CD4-positive, alpha-beta memory T cell (primary cell): ENCODE measurements at regions of chr12 and their contacts with region 1.

Region 1: GRCh38 chr12:9647825-9648700 is 21.4 kb upstream of the CLEC2D start:
- DNase-seq: peak; percentile 94 to 96 (median 94)
- H3K4me3 ChIP-seq: peak overlapping the region; percentile 91 to 99
- H3K4me3 Mint-ChIP-seq: peak overlapping the region; percentile 94 to 100 (median 99)
- H3K27ac ChIP-seq: peak overlapping the region; percentile 83
- H3K27ac Mint-ChIP-seq: peak overlapping the region; percentile 85 to 99 (median 97)
- H3K4me1 ChIP-seq: peaks cover 62% of the 10 kb centered on the region
- H3K4me1 Mint-ChIP-seq: peaks cover 39 to 66% (median 50%) of the 10 kb centered on the region in 4 donors
- H3K27me3 ChIP-seq: no peaks in the 10 kb centered on the region
- H3K27me3 Mint-ChIP-seq: no peaks in the 10 kb centered on the region

Region 2: DNA sequence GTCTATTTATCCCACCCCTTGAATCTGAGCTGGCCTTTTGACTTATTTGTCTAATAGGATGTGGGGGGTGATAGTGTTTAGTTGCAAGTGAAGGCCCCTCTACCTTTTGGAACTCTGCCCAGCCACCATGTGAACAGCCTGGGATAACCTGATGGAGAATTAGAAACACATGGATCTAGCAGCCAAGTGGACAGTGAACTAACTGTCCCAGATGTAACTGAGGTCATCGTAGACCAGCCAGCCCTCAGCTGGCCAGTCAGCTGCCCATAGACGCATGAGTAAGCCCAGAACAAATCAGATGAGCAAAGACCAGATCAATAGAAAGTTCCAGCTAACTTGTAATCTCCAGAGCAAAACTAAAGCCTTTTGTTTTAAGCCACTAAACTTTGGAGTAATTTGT is 59.3 kb before region 1 on chr12:
- CTCF ChIA-PET with region 1: no interaction called
- POLR2A ChIA-PET with region 1: no interaction called
- intact Hi-C with region 1: no loop called
- DNase-seq: no peak
- H3K4me3 ChIP-seq: no peak overlapping the region
- H3K4me3 Mint-ChIP-seq: peak overlapping the region in 1 of 8 donors; percentile 12
- H3K27ac ChIP-seq: no peak overlapping the region
- H3K27ac Mint-ChIP-seq: peak overlapping the region in 1 of 7 donors; percentile 55
- H3K4me1 ChIP-seq: no peaks in the 10 kb centered on the region
- H3K4me1 Mint-ChIP-seq: peaks cover 0 to 1% (median 0%) of the 10 kb centered on the region in 4 donors
- H3K27me3 ChIP-seq: no peaks in the 10 kb centered on the region
- H3K27me3 Mint-ChIP-seq: no peaks in the 10 kb centered on the region

Region 3: GRCh38 chr12:9634177-9634803 is 13.8 kb before region 1 on chr12:
- CTCF ChIA-PET with region 1: interaction called, 16 read pairs
- POLR2A ChIA-PET with region 1: interaction called, 120 read pairs
- intact Hi-C with region 1: loop called (anchors 1 kb)
- DNase-seq: peak; percentile 76 to 77 (median 77)
- H3K4me3 ChIP-seq: no peak overlapping the region
- H3K4me3 Mint-ChIP-seq: peak overlapping the region in 6 of 8 donors; percentile 51 to 80 (median 61)
- H3K27ac ChIP-seq: no peak overlapping the region
- H3K27ac Mint-ChIP-seq: peak overlapping the region; percentile 22 to 97 (median 91)
- H3K4me1 ChIP-seq: peaks cover 70% of the 10 kb centered on the region
- H3K4me1 Mint-ChIP-seq: peaks cover 47 to 92% (median 73%) of the 10 kb centered on the region in 4 donors
- H3K27me3 ChIP-seq: no peaks in the 10 kb centered on the region
- H3K27me3 Mint-ChIP-seq: no peaks in the 10 kb centered on the region

Region 4: DNA sequence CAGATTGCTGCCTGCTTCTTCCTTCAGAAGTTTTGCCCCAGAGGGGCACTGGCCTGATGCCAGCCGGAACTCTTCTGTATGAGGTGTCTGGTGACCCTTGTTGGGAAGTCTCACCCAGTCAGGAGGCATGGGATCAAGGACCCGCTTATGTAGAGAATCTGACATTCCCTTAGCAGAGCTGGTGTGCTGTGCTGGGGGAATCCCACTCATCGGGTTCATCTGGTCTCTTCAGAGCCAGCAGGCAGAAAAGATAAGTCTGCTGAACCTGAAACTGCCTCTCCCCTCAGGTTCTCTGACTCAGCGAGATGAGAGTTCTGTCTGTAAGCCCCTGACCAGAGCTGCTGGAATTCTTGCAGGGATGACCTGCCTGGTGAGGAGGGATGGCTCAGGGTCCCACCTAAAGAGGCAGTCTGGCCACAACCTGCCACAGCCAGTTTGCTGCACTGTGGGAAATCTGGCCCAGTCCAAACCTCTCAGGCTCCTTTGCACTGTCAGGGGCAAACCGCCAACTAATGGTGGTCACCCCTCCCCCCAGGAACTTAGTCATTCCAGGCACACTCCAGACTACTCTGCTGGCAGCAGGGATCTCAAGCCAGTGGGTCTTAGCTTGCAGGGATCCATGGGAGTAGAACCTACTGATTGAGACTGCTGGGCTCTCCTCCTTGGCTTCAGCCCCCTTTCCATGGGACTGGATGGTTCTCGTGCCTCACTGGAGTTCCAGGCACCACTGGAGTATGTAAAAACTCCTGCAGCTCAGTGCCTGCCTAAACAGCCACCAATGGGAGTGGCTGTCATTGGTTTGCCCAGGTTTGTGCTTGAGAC is 25.6 kb after region 1 on chr12:
- CTCF ChIA-PET with region 1: interaction called, 20 read pairs
- POLR2A ChIA-PET with region 1: interaction called, 881 read pairs
- intact Hi-C with region 1: loop called (anchors 1 kb)
- DNase-seq: peak; percentile 46 to 81 (median 56)
- H3K4me3 ChIP-seq: peak overlapping the region; percentile 32 to 74
- H3K4me3 Mint-ChIP-seq: peak overlapping the region; percentile 87 to 95 (median 94)
- H3K27ac ChIP-seq: peak overlapping the region; percentile 79
- H3K27ac Mint-ChIP-seq: peak overlapping the region; percentile 79 to 98 (median 96)
- H3K4me1 ChIP-seq: peaks cover 72% of the 10 kb centered on the region
- H3K4me1 Mint-ChIP-seq: peaks cover 44 to 89% (median 61%) of the 10 kb centered on the region in 4 donors
- H3K27me3 ChIP-seq: no peaks in the 10 kb centered on the region
- H3K27me3 Mint-ChIP-seq: no peaks in the 10 kb centered on the region

Region 5: GRCh38 chr12:9702255-9702654 is 54.2 kb after region 1 on chr12:
- CTCF ChIA-PET with region 1: interaction called, 6 read pairs
- POLR2A ChIA-PET with region 1: interaction called, 100 read pairs
- intact Hi-C with region 1: loop called (anchors 1 kb)
- DNase-seq: peak; percentile 54 to 74 (median 66)
- H3K4me3 ChIP-seq: peak overlapping the region; percentile 4 to 12
- H3K4me3 Mint-ChIP-seq: peak overlapping the region; percentile 35 to 81 (median 75)
- H3K27ac ChIP-seq: peak overlapping the region; percentile 58
- H3K27ac Mint-ChIP-seq: peak overlapping the region; percentile 85 to 97 (median 93)
- H3K4me1 ChIP-seq: peaks cover 77% of the 10 kb centered on the region
- H3K4me1 Mint-ChIP-seq: peaks cover 67 to 84% (median 73%) of the 10 kb centered on the region in 4 donors
- H3K27me3 ChIP-seq: no peaks in the 10 kb centered on the region
- H3K27me3 Mint-ChIP-seq: no peaks in the 10 kb centered on the region

Region 6: GRCh38 chr12:10160659-10161385 is 512.8 kb after region 1 on chr12:
- CTCF ChIA-PET with region 1: no interaction called
- POLR2A ChIA-PET with region 1: no interaction called
- intact Hi-C with region 1: no loop called
- DNase-seq: no peak
- H3K4me3 ChIP-seq: no peak overlapping the region
- H3K4me3 Mint-ChIP-seq: no peak overlapping the region
- H3K27ac ChIP-seq: no peak overlapping the region
- H3K27ac Mint-ChIP-seq: no peak overlapping the region
- H3K4me1 ChIP-seq: no peaks in the 10 kb centered on the region
- H3K4me1 Mint-ChIP-seq: no peaks in the 10 kb centered on the region
- H3K27me3 ChIP-seq: no peaks in the 10 kb centered on the region
- H3K27me3 Mint-ChIP-seq: peaks cover 2 to 3% of the 10 kb centered on the region in 2 donors